Right ventricle myocardium superior (tissue), 1 donor: ENCODE measurements at regions of chr6 and their contacts with region 1.

Region 1: DNA sequence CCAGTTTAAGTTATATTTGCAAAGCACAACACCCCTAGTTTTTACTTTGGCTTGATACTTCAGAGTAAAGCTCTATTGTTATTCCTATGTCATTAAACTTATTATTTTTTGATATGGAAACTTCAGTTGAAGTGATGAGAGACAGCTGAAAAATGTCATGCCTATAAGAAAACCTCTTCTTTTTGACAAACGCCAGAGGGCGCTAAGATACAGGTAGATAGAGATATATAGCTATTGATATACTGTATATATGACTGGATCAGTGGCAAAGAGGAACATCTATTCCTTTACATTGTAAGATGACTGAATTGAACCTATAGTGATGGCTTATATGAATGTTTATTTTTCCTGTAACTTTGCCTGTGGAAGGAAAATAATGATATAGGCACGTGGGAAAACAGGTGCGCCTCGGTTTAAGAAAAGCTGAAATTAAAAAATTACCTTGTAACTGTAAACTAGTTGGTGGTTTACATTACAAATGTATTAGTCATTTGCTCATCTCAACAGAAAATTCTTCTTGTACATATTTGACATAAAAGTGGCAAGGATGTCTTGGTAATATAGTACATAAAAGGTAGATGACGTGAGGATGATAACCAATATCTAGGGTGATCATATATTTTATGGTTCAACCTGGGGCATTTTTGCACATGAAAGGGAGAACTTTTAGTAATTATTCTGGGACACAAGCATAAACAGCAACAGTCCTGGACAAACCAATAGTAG is 74.1 kb downstream of the LAMA4 start:
- DNase-seq: no peak
- ATAC-seq: peak; percentile 86

Region 2: DNA sequence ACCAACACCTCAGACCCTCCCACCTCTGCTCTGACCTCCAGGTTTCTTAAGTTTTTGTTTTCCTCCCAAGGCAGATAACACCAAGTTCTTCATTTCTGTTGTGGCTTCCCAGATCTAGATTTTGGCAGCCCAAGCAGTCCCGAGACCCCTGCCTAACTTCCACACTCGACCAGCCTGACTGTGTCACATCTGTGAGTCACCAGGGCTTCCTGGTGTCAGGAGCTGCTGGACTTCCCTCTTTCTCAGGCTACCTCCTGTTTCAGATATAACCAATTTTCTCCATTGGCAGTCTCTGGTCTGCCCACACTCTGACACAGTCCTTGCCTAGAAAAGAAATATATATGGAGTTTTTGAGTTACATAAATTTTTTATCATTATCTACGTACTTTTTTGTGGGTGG is 172.5 kb before region 1 on chr6:
- intact Hi-C with region 1: no loop called
- DNase-seq: no peak
- ATAC-seq: peak; percentile 38

Region 3: DNA sequence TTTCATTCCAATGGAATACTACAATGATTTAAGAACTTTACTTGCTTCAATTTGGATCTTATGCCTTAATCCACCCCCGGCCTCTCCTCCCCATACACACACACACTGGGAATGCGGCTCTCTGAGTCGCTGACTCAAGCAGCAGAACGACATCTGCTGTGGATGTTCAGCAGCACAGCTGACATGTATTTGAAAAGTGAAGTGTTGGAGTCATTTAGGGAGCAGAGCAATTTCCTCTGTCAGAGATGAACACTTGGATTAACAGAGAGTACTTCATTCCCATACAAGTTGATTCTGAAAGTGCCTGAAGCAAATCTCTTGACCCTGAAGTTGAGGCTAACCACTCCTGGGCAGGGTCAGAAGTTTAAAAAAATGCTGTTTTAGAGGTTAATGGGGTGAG is 102.0 kb after region 1 on chr6:
- intact Hi-C with region 1: loop called (anchors 5 kb)
- DNase-seq: peak; percentile 66
- ATAC-seq: peak; percentile 90

Region 4: DNA sequence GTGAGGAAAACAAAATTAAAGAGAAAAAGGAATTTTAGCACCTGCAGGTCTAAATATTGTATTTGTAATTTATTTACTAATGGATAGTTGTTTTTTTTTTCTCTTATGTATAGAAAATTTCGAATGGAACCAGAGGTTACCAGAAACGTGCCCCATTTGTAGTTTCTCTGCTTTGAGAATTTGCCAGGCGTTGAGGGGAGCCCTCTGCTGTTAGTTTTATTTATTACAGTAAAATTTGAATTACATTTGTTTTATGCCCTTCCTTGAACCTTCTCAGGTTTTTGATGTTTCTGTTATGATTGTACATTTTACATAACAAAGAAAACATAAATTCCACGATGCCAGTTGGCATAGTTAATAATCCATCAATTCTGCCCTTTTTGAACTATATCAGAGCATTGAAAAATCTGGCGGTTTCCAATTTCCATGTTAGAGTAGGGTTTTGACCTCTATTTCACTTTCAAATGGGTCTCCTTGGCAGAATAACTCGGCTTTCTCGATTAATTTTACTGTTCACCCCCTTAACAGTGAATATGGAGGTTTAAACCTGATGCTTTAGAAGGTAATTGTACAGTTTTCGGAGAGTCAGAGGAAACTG is 131.8 kb after region 1 on chr6:
- intact Hi-C with region 1: loop called (anchors 2 kb)
- DNase-seq: no peak
- ATAC-seq: peak; percentile 54